Esophagus muscularis mucosa (tissue), 4 donors: ENCODE measurements at regions of chr9 and their contacts with region 1.

Region 1: GRCh38 chr9:15211160-15211814 is 95.7 kb downstream of the TTC39B start:
- DNase-seq: no peak
- H3K4me3 ChIP-seq: no peak overlapping the region
- H3K27ac ChIP-seq: peak overlapping the region; percentile 19 to 67 (median 42)
- H3K4me1 ChIP-seq: peaks cover 12 to 19% (median 14%) of the 10 kb centered on the region in 4 donors
- H3K27me3 ChIP-seq: no peaks in the 10 kb centered on the region
- CTCF ChIP-seq: peak; percentile 91 to 96 (median 93)
- EP300 ChIP-seq: no peak
- POLR2A ChIP-seq: no peak

Region 2: DNA sequence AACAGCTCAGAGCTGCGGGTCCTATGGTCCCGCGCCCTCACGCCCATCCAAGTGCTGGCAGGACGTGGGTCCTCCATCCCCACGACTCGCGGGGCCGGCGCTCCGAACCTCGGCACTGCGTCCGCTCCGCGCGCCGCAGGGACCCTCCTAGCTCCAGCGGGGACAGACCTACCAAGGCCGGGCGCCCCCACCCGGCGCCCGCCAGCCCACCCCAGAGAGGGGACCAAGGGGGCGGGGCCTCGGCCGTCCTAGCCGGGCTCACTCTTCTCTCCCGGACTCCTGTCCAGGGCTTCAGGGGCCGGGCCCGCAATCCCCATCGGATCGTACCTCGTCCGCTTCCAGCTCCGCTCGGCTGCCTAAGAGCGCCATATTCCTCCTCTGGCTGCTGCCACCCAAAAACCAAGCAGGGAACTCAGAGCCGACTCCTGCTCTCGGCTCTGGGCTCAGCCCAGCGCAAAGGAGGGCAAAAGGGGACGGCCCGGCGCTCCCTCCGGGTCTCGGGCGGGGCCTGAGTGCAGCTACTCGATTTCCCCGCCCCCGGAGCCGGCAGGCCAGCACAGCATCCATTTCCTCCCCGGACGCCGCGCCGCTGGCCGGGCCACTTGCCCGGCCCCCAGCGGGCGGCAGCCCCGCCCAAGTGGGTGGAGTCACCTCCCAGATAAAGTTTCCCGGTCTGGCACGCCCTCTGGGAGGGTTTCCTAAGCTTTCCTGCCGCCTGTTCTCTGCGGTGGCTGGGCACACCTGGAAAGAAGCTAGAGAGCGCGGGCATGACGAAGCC is 95.7 kb after region 1 on chr9 and contains the start of gene TTC39B:
- intact Hi-C with region 1: loop called (anchors 5 kb)
- DNase-seq: peak; percentile 96
- H3K4me3 ChIP-seq: peak within 1 kb of the TSS; percentile 87 to 98 (median 94)
- H3K27ac ChIP-seq: peak within 1 kb of the TSS; percentile 89 to 95 (median 94)
- H3K4me1 ChIP-seq: peaks cover 4 to 26% (median 17%) of the 10 kb centered on the region in 4 donors
- H3K27me3 ChIP-seq: no peaks in the 10 kb centered on the region
- CTCF ChIP-seq: peak; percentile 9 to 46 (median 32)
- EP300 ChIP-seq: no peak
- POLR2A ChIP-seq: peak; percentile 47
- total RNA-seq, gene TTC39B: 8.3 to 13.4 (median 10.9) TPM

Region 3: GRCh38 chr9:15416880-15417279 is 205.6 kb after region 1 on chr9:
- intact Hi-C with region 1: loop called (anchors 5 kb)
- DNase-seq: no peak
- H3K4me3 ChIP-seq: no peak overlapping the region
- H3K27ac ChIP-seq: no peak overlapping the region
- H3K4me1 ChIP-seq: peaks cover 0 to 4% (median 3%) of the 10 kb centered on the region in 4 donors
- H3K27me3 ChIP-seq: no peaks in the 10 kb centered on the region
- CTCF ChIP-seq: peak; percentile 40 to 47 (median 44)
- EP300 ChIP-seq: no peak
- POLR2A ChIP-seq: no peak

Region 4: GRCh38 chr9:15606643-15607472 is 395.6 kb after region 1 on chr9:
- intact Hi-C with region 1: loop called (anchors 5 kb)
- DNase-seq: no peak
- H3K4me3 ChIP-seq: no peak overlapping the region
- H3K27ac ChIP-seq: no peak overlapping the region
- H3K4me1 ChIP-seq: no peaks in the 10 kb centered on the region
- H3K27me3 ChIP-seq: no peaks in the 10 kb centered on the region
- CTCF ChIP-seq: peak; percentile 77 to 83 (median 82)
- EP300 ChIP-seq: no peak
- POLR2A ChIP-seq: no peak